Gastrocnemius medialis (tissue), 4 donors: ENCODE measurements at regions of chr1 and their contacts with region 1.

Region 1: GRCh38 chr1:153922972-153923925 is at the start of gene GATAD2B:
- DNase-seq: peak; percentile 100
- ATAC-seq: peak; percentile 96 to 98
- H3K4me3 ChIP-seq: peak within 1 kb of the TSS; percentile 56 to 93 (median 92)
- H3K27ac ChIP-seq: peak within 1 kb of the TSS; percentile 98 to 99 (median 98)
- H3K4me1 ChIP-seq: peaks cover 42% of the 10 kb centered on the region in 2 donors
- H3K27me3 ChIP-seq: no peaks in the 10 kb centered on the region
- CTCF ChIP-seq: no peak
- POLR2A ChIP-seq: peak; percentile 2 to 68
- total RNA-seq, gene GATAD2B: 22.0 to 40.7 (median 28.1) TPM

Region 2: DNA sequence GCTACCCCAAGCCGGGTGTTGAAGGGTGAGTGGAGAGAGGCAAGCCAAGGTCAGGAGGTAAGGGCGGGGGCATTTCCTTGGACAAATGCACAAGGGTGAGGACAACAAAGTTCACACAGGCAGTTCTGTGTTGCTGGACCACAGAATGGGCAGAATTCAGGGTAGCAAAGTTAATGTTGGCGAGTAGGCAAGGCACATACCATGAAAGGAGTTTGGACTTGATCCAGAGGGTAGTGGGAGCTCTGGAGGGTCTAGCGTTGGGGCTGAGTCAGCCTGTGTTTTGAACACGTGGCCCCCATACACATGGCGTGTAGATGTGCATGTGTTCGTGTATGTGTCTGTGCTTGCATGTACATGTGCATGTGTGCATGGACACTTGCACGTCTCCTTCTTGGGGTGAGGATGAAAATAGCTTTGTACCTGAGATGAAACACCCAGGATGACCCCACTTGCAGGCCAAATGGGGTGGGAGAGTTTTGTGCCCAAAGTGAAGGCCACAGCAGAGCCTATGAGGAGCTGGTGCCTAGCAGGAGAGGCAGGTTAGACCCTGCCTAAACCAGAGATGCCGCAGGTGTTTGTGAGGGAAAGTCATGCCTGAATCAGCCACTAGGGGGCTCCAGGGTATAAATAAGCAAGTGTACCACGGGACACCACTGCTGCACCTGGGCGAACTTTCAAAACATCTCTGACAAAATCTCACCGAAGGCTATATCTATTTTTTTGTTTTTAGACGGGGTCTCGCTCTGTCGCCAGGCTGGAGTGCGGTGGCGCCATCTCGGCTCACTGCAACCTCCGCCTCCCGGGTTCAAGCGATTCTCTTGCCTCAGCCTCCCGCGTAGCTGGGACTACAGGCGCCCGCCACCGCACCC is 126.2 kb before region 1 on chr1:
- in situ Hi-C with region 1: loop called in 3 of 4 experiments (anchors 25 kb)
- intact Hi-C with region 1: loop called (anchors 5 kb)
- DNase-seq: peak; percentile 62 to 81
- ATAC-seq: peak; percentile 89 to 91
- H3K4me3 ChIP-seq: no peak overlapping the region
- H3K27ac ChIP-seq: no peak overlapping the region
- H3K4me1 ChIP-seq: no peaks in the 10 kb centered on the region
- H3K27me3 ChIP-seq: no peaks in the 10 kb centered on the region
- CTCF ChIP-seq: peak; percentile 86 to 98 (median 94)
- POLR2A ChIP-seq: no peak

Region 3: DNA sequence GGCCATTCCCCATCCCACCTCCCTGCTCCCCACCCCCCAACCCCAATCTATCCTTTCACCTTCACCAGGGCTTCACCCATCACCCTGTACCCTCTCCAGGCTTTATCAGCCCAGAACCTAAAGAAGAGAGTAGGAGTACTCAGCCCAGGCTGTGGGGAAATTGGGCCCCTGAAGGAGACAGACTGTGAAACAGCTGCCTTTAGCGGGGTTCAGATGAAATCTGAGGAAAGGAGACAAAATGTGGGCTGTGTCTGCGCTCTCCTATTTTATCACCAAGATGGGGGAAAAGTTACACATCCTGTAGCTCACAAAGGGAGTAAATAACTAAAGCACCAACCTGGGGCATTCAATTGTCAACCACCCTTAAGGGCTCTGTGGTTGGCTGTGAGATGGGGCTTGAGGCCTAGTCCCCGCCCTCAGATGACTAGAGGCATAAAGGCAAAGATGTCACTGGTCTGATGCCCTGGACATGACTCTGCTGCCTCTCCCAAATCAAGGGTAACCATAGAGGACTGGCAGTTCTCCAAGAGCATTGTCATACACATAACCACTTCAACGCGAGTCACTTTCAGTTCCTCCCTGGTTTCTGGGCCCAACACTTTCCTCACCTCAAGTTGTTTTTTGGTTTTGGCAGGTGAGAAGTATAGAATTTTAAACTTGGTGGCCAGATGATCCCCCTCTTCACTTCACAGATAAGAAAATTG is 118.1 kb before region 1 on chr1:
- in situ Hi-C with region 1: loop called in 3 of 4 experiments (anchors 25 kb)
- intact Hi-C with region 1: no loop called
- DNase-seq: peak; percentile 70 to 73
- ATAC-seq: peak; percentile 92
- H3K4me3 ChIP-seq: no peak overlapping the region
- H3K27ac ChIP-seq: peak overlapping the region; percentile 15 to 82 (median 68)
- H3K4me1 ChIP-seq: peaks cover 0 to 30% of the 10 kb centered on the region in 2 donors
- H3K27me3 ChIP-seq: no peaks in the 10 kb centered on the region
- CTCF ChIP-seq: no peak
- POLR2A ChIP-seq: no peak

Region 4: DNA sequence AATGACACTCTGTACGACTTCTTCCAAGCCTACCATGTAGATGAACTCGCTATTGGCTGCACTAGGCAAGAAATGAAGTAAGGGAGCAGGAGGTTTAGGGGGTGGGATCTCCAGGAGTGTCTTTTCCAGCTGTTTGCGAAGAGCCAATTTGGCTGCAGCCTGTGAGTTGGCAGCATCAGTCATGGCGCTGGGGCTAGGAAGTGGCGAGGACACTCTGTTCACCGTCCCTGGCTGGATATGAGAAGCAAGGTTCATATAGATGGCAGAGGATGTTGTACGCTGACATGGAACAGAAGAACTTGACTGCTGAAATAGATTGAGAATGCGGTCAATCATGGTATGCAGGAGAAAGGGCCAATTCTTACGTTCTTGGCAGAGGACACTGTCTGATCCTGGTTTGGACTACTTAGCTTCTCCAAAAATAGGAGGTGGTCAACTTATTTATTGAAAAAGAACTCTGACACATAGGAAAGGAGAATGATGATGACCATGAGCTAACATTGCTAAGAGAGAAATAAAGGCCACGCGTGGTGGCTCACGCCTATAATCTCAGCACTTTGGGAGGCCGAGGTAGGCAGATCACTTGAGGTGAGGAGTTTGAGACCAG is 106.9 kb before region 1 on chr1:
- in situ Hi-C with region 1: loop called in 3 of 4 experiments (anchors 25 kb)
- intact Hi-C with region 1: loop called (anchors 5 kb)
- DNase-seq: peak in 1 of 2 donors; percentile 26
- ATAC-seq: peak; percentile 57 to 80
- H3K4me3 ChIP-seq: no peak overlapping the region
- H3K27ac ChIP-seq: peak overlapping the region; percentile 19 to 74 (median 38)
- H3K4me1 ChIP-seq: peaks cover 0 to 25% of the 10 kb centered on the region in 2 donors
- H3K27me3 ChIP-seq: no peaks in the 10 kb centered on the region
- CTCF ChIP-seq: no peak
- POLR2A ChIP-seq: no peak

Region 5: DNA sequence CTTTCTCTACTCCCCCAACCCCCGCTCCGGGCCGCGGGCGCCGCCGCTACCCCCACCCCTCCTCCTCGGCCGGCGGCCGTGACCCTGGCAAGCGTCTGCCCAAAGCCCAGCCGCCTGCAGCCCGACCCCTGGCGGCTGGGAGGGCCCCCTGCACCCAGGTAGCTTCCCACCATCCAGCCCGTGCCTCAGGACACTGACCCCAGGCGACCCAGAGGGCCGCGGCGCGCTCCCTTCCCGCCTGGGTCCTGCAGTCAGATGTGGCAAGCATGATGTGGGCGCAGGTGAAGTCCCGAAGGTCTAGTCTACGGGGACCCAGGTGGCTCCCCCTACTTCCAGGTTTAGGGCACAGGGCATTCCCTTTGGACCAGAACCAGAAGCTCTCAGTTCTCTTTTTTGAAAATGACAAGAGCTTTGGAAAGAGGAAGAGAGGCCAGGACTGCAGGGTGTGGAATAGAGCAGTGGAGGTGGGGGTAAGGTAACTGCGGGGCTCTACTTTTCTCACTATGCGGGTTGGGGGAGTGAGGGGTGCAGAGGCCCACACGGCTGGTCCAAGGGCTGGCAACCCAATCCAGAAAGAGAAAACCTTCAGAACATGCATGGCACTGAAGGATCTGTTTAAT is 23.5 kb after region 1 on chr1 and contains the start of gene DENND4B:
- in situ Hi-C with region 1: no loop called
- intact Hi-C with region 1: loop called (anchors 1 kb)
- DNase-seq: peak; percentile 71 to 86
- ATAC-seq: peak; percentile 74 to 75
- H3K4me3 ChIP-seq: peak within 1 kb of the TSS; percentile 70 to 90 (median 78)
- H3K27ac ChIP-seq: peak within 1 kb of the TSS; percentile 98 to 99 (median 98)
- H3K4me1 ChIP-seq: peaks cover 15 to 31% of the 10 kb centered on the region in 2 donors
- H3K27me3 ChIP-seq: no peaks in the 10 kb centered on the region
- CTCF ChIP-seq: peak; percentile 91 to 99 (median 97)
- POLR2A ChIP-seq: no peak
- total RNA-seq, gene DENND4B: 38.0 to 45.8 (median 40.1) TPM

Region 6: DNA sequence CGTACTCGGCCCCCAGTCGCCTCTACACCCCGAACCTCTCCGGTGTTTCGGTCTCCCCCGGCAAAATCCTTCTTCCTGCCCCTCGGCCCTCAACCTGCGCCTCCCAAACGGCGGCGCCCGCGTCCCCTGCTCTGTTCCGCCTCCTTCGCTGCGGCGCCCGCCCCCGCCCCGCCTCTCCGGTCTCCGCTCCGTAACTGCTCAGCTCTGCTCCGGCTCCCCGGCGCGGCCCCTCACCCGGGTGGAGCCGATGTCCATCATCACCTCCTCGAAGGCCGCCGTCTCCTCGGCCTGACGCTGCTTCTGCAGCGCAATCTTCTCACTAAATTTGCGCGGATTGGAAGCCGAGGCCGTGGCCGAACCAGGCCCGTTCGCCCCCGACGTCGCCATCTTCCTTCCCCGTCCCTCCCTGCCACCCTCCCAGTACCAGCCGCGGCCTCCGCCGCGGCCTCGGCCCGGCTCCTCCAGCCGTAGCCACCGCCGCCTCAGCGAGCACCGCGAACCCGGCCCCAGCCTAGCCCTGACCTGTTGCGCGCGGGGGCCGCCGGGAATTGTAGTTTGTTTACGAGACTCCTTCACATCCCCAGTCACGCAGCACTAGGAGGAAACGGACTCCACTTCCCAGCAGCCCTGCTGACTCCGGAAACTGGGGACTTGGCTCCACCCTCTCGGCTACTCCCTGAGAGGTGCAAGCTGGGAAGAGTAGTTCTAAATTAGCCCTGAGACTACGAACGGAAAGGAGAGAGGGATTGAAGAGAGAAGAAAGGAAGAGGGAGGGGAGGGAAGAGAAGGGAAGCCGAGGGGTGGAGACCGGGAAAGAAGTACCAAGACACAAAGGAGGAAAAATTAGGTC is 35.1 kb after region 1 on chr1 and contains the start of gene CRTC2:
- in situ Hi-C with region 1: no loop called
- intact Hi-C with region 1: loop called (anchors 1 kb)
- DNase-seq: peak; percentile 99
- ATAC-seq: peak; percentile 81 to 88
- H3K4me3 ChIP-seq: peak within 1 kb of the TSS; percentile 88 to 100 (median 98)
- H3K27ac ChIP-seq: peak within 1 kb of the TSS; percentile 91 to 98 (median 94)
- H3K4me1 ChIP-seq: peaks cover 69 to 72% of the 10 kb centered on the region in 2 donors
- H3K27me3 ChIP-seq: no peaks in the 10 kb centered on the region
- CTCF ChIP-seq: no peak
- POLR2A ChIP-seq: peak; percentile 82 to 83
- total RNA-seq, gene CRTC2: 17.4 to 27.1 (median 23.3) TPM